ENCODE measurements at regions of chr12 and their contacts with region 1.

Region 1: DNA sequence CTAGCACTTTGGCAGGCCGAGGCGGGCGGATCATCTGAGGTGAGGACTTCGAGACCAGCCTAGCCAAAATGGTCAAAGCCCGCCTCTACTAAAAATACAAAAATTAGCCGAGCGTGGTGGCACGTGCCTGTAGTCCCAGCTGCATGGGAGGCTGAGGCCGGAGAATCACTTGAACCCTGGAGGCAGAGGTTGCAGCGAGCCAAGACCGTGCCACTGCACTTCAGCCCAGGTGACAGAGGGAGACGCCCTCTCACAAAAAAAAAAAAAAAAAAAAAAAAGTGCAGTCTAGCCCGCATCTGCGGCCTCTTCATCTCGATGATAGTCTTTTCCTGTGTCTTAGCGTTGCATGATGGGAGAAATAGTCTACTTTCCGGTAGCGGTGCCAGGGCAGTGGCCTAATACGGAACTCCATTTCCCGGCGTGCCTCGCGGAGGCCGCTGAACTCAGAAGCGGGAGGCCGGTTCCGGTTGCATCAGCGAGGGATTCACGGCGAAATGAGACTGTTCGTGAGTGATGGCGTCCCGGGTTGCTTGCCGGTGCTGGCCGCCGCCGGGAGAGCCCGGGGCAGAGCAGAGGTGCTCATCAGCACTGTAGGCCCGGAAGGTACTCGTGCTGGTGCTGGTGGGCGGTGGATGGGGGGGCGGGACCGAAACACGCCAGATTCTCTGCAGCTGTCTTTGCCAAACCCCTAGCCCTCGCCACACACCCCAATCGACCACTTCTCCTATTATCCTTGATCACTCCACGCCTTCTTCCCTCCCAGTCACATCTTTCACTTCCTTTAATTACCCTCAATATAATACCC is at the start of gene MARS1:
- DNase-seq: peak; percentile 95
- H3K4me3 ChIP-seq: peak within 1 kb of the TSS; percentile 60 to 99 (median 94)
- H3K27ac ChIP-seq: peak within 1 kb of the TSS; percentile 48
- H3K4me1 ChIP-seq: peaks cover 9% of the 10 kb centered on the region
- H3K27me3 ChIP-seq: no peaks in the 10 kb centered on the region
- CTCF ChIP-seq: no peak
- POLR2A ChIP-seq: peak; percentile 86
- total RNA-seq, gene MARS1: 212 and 216 TPM in 2 replicates

Region 2: DNA sequence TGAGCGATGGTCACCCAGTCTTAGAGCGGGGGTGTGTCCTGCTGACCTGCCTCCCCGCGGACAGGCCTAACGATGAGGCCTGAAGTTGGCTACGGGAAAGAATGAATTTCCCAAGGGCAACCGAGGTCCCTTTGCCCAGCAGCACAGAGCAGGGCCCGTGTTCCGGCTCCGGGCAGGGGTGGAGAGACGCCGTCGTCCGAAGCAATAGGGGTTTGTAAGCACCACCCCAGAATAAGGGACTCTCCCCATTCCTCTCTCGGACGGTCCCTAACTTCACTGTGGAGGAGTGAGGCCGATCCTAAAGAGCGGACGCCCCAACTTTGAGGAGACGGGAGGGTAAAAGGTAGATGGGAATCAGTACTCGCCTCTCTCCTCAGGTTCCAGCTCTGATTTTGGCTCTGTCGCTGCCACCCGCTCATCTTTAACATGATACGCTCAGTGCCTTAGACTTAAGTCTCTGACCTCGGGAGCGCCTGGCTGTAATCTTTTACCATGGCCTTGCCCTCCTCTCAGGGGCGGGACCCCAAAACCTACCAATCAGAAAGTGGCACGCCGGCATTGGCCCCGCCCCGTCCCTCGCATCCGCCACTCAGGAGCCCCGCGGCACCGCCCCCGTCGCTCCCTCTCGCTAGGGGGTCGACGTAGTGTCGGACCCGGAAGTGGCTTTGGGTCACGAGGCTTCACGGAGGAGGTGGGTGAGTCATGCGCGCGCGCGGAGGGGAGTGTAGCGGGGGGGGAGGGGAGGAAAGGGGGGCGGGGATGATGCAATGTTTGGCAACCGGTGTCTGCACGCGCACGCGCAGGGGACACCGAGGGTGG is 32.5 kb after region 1 on chr12 and contains the start of gene DDIT3:
- CTCF ChIA-PET with region 1: no interaction called
- POLR2A ChIA-PET with region 1: no interaction called
- dilution Hi-C with region 1: no loop called
- intact Hi-C with region 1: loop called (anchors 5 kb)
- DNase-seq: peak; percentile 99
- H3K4me3 ChIP-seq: peak within 1 kb of the TSS; percentile 7 to 89 (median 67)
- H3K27ac ChIP-seq: peak within 1 kb of the TSS; percentile 83
- H3K4me1 ChIP-seq: peaks cover 48% of the 10 kb centered on the region
- H3K27me3 ChIP-seq: no peaks in the 10 kb centered on the region
- CTCF ChIP-seq: no peak
- POLR2A ChIP-seq: peak; percentile 100
- total RNA-seq, gene DDIT3: 9.8 and 13.7 TPM in 2 replicates

Region 3: DNA sequence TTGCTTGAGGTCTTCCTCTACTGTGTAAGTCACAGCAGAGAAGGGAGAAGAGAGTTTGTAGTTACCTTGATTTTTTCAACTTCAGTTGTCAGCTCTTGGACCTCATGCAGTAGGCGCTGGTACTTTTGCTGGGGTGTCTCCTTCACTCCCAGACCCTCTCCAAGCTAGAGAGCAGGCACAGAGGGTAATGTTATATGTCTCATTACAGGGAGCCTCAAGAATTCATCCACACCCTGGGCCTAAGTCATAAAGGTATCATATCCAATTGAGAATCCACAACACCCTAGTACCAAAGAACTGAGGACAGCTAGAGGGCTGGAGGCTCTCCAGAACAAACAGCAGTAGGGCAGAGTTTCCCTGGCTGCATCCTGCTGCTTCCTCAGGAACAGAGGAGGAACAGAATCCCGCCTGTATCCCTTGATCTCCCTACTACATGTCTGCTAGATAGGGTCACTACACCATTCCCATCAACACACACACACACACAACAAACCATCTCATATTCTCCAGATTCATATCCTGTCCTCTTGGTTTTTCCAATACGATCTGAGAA is 47.3 kb after region 1 on chr12:
- CTCF ChIA-PET with region 1: no interaction called
- POLR2A ChIA-PET with region 1: no interaction called
- dilution Hi-C with region 1: no loop called
- intact Hi-C with region 1: no loop called
- DNase-seq: no peak
- H3K4me3 ChIP-seq: no peak overlapping the region
- H3K27ac ChIP-seq: no peak overlapping the region
- H3K4me1 ChIP-seq: no peaks in the 10 kb centered on the region
- H3K27me3 ChIP-seq: no peaks in the 10 kb centered on the region
- CTCF ChIP-seq: no peak
- POLR2A ChIP-seq: no peak